Activated naive CD4-positive, alpha-beta T cell treated with anti-CD3 and anti-CD28 coated beads for 36 hours (primary cell): ENCODE measurements at regions of chr15 and their contacts with region 1.

Region 1: DNA sequence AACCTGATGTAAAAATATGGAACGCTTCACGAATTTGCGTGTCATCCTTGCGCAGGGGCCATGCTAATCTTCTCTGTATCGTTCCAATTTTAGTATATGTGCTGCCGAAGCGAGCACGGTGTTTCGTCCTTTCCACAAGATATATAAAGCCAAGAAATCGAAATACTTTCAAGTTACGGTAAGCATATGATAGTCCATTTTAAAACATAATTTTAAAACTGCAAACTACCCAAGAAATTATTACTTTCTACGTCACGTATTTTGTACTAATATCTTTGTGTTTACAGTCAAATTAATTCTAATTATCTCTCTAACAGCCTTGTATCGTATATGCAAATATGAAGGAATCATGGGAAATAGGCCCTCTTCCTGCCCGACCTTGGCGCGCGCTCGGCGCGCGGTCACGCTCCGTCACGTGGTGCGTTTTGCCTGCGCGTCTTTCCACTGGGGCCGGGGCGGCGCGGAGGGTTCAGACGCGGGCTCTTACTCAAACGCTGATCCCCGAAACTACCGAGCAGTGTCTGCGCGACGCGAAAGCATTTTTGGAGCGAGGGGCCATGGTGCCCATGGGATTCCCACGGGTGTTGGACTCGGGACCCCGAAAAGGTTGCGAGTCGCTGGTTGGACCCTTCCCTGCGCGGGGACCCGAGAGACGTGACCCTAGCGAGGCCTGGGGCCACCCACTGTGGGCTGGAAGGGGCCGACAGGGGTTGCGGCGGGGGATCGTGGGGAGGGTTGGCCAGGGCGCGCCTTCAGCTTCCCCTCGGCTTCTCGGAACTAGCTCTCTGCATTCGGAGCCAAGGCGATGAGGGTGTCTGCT is at the start of gene RNU6-1:
- DNase-seq: peak; percentile 94
- H3K4me3 Mint-ChIP-seq: peak within 1 kb of the TSS; percentile 89
- H3K27ac Mint-ChIP-seq: peak within 1 kb of the TSS; percentile 93
- H3K4me1 Mint-ChIP-seq: peaks cover 24% of the 10 kb centered on the region
- H3K27me3 Mint-ChIP-seq: peaks cover 15% of the 10 kb centered on the region
- total RNA-seq, gene RNU6-1: not detected

Region 2: DNA sequence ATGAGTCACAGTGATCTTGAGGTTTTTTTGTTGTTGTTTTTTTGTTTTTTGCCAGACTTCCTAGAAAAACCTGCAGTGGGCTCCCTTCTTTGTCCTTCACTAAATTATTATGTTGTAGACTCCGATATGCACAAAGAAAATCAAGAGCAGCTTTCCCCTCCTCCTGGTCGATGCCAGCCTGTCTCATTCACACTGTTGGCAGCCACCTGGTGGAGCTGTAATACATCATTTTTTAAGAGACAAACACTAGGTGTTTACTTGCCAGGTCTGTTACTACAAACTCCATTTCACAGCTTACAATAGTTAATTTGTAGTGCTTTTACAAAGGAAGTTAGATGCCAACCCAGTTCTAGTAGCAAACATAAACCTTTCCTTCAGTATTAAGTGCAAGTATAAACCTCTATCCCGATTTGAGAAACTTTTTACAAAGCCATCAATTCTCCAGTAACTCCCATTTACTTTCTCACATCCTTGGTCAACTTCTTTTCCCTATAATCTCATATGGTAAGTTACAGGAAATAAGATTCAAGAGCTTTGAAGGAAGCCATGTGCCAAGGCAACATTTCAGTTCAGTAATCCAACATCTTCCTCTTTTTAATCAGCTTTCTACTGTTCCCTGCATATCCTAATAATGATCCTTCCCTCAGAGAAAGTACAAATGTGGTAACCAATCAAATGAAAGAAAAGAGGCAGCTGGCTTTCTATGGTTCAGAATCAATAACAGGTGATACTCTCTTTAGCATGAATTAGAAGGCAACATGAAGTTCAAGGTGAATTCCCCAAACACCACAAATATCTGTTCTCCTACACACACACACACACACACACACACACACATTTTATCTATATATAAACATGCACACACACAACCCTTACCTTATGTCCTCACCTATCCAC is 599.7 kb before region 1 on chr15:
- CTCF ChIA-PET with region 1: no interaction called
- intact Hi-C with region 1: loop called (anchors 1 kb)
- DNase-seq: peak; percentile 48
- H3K4me3 Mint-ChIP-seq: peak overlapping the region; percentile 5
- H3K27ac Mint-ChIP-seq: peak overlapping the region; percentile 87
- H3K4me1 Mint-ChIP-seq: peaks cover 45% of the 10 kb centered on the region
- H3K27me3 Mint-ChIP-seq: no peaks in the 10 kb centered on the region

Region 3: GRCh38 chr15:67501177-67501835 is 338.8 kb before region 1 on chr15:
- CTCF ChIA-PET with region 1: interaction called, 5 read pairs
- intact Hi-C with region 1: loop called (anchors 1 kb)
- DNase-seq: no peak
- H3K4me3 Mint-ChIP-seq: no peak overlapping the region
- H3K27ac Mint-ChIP-seq: no peak overlapping the region
- H3K4me1 Mint-ChIP-seq: no peaks in the 10 kb centered on the region
- H3K27me3 Mint-ChIP-seq: peaks cover 2% of the 10 kb centered on the region

Region 4: GRCh38 chr15:67762610-67763368 is 77.3 kb before region 1 on chr15:
- CTCF ChIA-PET with region 1: no interaction called
- intact Hi-C with region 1: loop called (anchors 5 kb)
- DNase-seq: peak; percentile 83
- H3K4me3 Mint-ChIP-seq: no peak overlapping the region
- H3K27ac Mint-ChIP-seq: peak overlapping the region; percentile 28
- H3K4me1 Mint-ChIP-seq: peaks cover 61% of the 10 kb centered on the region
- H3K27me3 Mint-ChIP-seq: no peaks in the 10 kb centered on the region

Region 5: GRCh38 chr15:68229386-68230156 is 389.4 kb after region 1 on chr15 and contains the start of gene CLN6:
- CTCF ChIA-PET with region 1: no interaction called
- intact Hi-C with region 1: loop called (anchors 1 kb)
- DNase-seq: peak; percentile 75
- H3K4me3 Mint-ChIP-seq: peak within 1 kb of the TSS; percentile 85
- H3K27ac Mint-ChIP-seq: peak within 1 kb of the TSS; percentile 80
- H3K4me1 Mint-ChIP-seq: peaks cover 43% of the 10 kb centered on the region
- H3K27me3 Mint-ChIP-seq: no peaks in the 10 kb centered on the region
- total RNA-seq, gene CLN6: 30.5 to 34.2 TPM